ENCODE measurements at regions of chr3 and their contacts with region 1.

Region 1: GRCh38 chr3:194404365-194405140 is 5.5 kb upstream of the GP5 start:
- DNase-seq: no peak
- H3K4me3 Mint-ChIP-seq: no peak overlapping the region
- H3K27ac Mint-ChIP-seq: no peak overlapping the region
- H3K4me1 Mint-ChIP-seq: peaks cover 23% of the 10 kb centered on the region
- H3K27me3 Mint-ChIP-seq: peaks cover 2% of the 10 kb centered on the region

Region 2: DNA sequence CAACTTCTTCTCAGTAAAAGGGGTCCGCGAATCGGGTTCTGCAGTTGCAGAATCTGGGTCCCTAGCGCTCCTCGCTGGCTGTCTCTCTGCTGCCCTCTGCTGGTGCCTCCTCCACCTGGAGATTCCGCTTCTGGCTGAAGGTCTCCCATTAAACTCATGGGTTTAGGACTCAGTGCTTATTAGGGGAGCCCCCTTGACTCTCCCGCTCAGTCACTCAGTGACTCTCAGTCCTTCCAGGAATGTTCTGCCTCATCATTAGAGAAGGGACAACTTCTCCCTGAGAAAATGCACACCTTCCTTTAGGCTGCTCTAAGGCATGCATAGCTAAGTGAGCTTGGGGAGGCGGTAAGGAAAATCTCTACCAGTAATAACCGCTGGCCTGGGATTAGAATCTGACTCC is 60.5 kb before region 1 on chr3:
- intact Hi-C with region 1: loop called (anchors 1 kb)
- DNase-seq: peak; percentile 48
- H3K4me3 Mint-ChIP-seq: no peak overlapping the region
- H3K27ac Mint-ChIP-seq: no peak overlapping the region
- H3K4me1 Mint-ChIP-seq: peaks cover 7% of the 10 kb centered on the region
- H3K27me3 Mint-ChIP-seq: peaks cover 15% of the 10 kb centered on the region

Region 3: DNA sequence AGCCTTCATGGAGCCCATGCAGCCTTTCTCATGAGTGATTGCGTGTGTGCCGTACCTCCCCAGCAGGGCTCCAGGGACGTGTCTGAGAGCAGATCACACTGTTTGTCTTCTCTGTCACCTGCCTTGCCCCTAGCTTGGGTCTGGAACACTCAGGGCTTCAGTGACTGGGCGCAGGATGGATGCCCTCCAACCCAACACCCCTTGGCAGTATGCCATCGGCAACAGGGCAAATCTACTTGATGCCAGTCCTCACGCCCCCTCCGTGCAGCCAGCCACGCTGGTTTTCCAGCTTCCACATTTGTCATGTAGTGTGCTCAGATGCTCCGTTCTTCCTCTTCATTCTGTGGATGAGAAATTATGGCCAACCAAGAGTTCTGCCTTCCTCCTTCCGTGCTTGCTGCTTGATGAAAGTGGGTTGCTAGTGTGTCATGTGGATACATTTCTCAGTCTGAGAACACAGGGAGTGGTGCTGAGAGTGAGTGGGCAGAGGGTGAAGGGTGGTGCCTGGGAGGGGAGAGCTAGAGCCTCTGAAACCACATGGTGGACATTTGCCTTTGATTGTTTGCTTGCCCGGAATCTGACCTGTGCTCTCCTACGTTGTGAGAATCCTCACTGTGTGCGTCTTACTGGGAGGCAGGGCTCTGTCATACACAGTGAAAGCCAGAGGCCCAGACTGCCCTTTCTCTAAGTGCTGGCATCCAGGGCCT is 378.3 kb after region 1 on chr3:
- intact Hi-C with region 1: no loop called
- DNase-seq: no peak
- H3K4me3 Mint-ChIP-seq: no peak overlapping the region
- H3K27ac Mint-ChIP-seq: no peak overlapping the region
- H3K4me1 Mint-ChIP-seq: no peaks in the 10 kb centered on the region
- H3K27me3 Mint-ChIP-seq: peaks cover 11% of the 10 kb centered on the region

Measured in activated T-helper 1 cell treated with anti-CD3 and anti-CD28 coated beads, Interleukin-12 subunit alpha, Interleukin-12 subunit beta, Interleukin-2, Interleukin-4 antibody, amounts not matched to agents 30 ng/mL and 10 ng/mL and 1 ng/mL, durations not matched to agents 14 hours and 24 hours and 36 hours (primary cell).